ENCODE measurements at regions of chr2 and their contacts with region 1.

Region 1: DNA sequence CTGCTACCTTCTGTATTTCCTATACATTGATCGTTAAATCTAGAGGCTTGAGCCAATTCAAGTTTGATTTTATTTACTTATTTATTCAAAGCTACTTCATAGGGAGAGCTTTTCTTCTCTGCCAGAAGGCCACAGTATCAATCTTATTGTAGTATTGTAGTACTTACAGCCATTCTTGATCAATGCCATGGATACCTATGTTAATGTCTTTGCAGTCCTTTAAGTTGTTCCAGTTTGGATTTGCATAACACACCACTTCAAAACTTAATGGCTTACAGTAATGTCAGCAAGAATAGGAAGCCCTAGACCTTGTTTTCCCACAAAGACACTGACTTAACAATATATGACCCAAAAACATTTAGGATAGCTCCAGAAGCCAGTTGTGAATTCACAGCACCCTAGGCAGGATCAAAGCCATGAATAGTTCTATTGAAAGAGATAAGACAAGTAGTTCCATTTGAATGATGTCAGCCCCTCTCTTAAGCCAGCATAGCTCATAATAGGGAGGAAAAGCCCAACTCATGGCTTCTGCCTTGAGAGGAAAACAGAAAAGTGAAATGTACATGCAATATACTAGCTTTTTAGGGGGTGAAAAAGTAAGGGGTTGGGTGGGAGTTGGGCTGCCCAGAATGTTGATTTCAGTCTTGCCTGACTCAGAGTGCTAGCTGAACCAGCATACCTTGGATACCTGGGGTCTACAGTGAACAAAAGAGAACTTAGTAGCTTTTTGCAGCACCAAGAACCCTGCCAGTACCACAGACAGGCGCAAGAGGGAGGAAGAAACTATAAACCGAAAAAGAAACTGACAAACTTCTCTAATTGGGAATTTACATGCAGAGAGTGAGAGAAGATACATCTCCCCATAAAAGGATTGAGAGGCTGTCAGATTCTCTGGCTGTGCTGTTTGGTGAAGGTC is 101.4 kb downstream of the CAMKMT start:
- DNase-seq: peak in 1 of 2 experiments; percentile 17
- H3K4me3 ChIP-seq: peak overlapping the region in 1 of 4 experiments; percentile 35; a peak in 1 of 8 replicates
- H3K27ac ChIP-seq: peak overlapping the region; percentile 71; the same call in 1 of the 2 replicates
- H3K4me1 ChIP-seq: peaks cover 0 to 13% (median 6%) of the 10 kb centered on the region in 4 experiments; a peak in 4 of 7 replicates
- H3K27me3 ChIP-seq: no peaks in the 10 kb centered on the region
- CTCF ChIP-seq: peak in 2 of 3 experiments; percentile 40 to 49; a peak in 3 of 4 replicates
- EP300 ChIP-seq: no peak
- POLR2A ChIP-seq: no peak
- RAD21 ChIP-seq: peak; percentile 35 to 42

Region 2: GRCh38 chr2:44367591-44367990 is 95.6 kb before region 1 on chr2:
- CTCF ChIA-PET with region 1: no interaction called
- POLR2A ChIA-PET with region 1: no interaction called
- DNase-seq: no peak
- H3K4me3 ChIP-seq: no peak overlapping the region
- H3K27ac ChIP-seq: no peak overlapping the region
- H3K4me1 ChIP-seq: peaks cover 0 to 2% (median 0%) of the 10 kb centered on the region in 4 experiments; a peak in 1 of 7 replicates
- H3K27me3 ChIP-seq: no peaks in the 10 kb centered on the region
- CTCF ChIP-seq: no peak
- EP300 ChIP-seq: no peak
- POLR2A ChIP-seq: no peak
- RAD21 ChIP-seq: no peak

Region 3: GRCh38 chr2:44443517-44443916 is 19.7 kb before region 1 on chr2:
- CTCF ChIA-PET with region 1: interaction called, 12 read pairs
- POLR2A ChIA-PET with region 1: interaction called, 4 read pairs
- DNase-seq: no peak
- H3K4me3 ChIP-seq: no peak overlapping the region
- H3K27ac ChIP-seq: no peak overlapping the region
- H3K4me1 ChIP-seq: peaks cover 0 to 7% (median 1%) of the 10 kb centered on the region in 4 experiments; a peak in 2 of 7 replicates
- H3K27me3 ChIP-seq: no peaks in the 10 kb centered on the region
- CTCF ChIP-seq: no peak
- EP300 ChIP-seq: no peak
- POLR2A ChIP-seq: peak in 1 of 2 experiments; percentile 53; a peak in 1 of 3 replicates
- RAD21 ChIP-seq: no peak

Region 4: DNA sequence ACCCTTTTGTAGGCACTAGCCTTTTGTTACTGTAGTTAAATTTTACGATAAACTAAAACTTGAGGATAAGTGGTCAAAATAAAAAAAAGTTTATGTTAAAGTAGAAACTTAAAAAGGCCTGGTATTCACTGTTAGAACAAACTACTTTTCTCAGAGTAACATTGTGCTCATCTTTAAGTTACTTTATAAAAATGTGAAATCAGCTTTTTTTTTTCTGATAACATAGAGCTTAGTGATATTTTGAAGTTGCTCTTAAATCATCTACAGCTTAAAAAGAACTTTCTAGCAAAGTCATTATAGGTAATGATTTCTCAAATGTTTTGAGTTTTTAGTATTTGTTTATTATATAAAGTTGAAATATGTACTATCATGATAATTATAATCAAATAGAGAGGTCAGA is 23.9 kb after region 1 on chr2:
- CTCF ChIA-PET with region 1: no interaction called
- POLR2A ChIA-PET with region 1: no interaction called
- DNase-seq: no peak
- H3K4me3 ChIP-seq: no peak overlapping the region
- H3K27ac ChIP-seq: no peak overlapping the region
- H3K4me1 ChIP-seq: peaks cover 0 to 2% (median 0%) of the 10 kb centered on the region in 4 experiments; a peak in 1 of 7 replicates
- H3K27me3 ChIP-seq: peaks cover 0 to 1% (median 0%) of the 10 kb centered on the region in 4 experiments; a peak in 1 of 7 replicates
- CTCF ChIP-seq: no peak
- EP300 ChIP-seq: no peak
- POLR2A ChIP-seq: no peak
- RAD21 ChIP-seq: no peak

Region 5: DNA sequence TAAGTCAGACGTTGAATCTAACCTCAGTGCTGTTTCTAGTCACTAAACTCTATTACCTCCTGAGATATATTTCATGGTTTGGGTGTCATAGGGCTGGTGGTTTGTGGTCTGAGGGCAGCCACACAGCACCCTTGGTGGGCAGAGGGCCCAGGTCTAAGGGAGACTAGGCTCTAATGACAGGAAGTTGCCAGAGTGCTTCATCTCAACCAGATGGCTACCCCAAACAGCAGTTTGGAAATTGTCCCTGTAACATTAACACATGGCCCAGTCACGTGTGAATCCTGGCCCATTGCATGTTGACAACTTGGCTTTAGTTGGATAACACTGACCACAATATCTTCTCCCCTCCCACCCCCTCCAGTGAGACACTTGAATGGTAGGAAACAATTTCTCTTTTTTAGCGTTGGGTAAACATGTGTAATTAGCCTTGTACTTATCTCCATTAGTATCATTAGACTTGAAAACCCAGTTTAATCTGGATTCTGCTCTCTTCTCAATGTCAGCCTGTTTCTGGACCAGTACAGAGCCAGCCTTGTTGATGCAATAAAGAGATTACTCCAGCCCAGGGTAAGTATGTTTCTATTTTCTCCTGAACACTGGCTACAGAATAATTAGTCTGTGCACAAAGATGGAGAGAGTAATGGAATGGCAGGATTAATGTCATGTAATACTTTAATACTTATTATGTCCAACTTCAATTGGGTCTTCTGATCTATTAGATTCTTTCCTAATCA is 290.5 kb after region 1 on chr2:
- CTCF ChIA-PET with region 1: no interaction called
- POLR2A ChIA-PET with region 1: no interaction called
- DNase-seq: no peak
- H3K4me3 ChIP-seq: no peak overlapping the region
- H3K27ac ChIP-seq: no peak overlapping the region
- H3K4me1 ChIP-seq: peaks cover 0 to 18% (median 9%) of the 10 kb centered on the region in 4 experiments; a peak in 4 of 7 replicates
- H3K27me3 ChIP-seq: no peaks in the 10 kb centered on the region
- CTCF ChIP-seq: no peak
- EP300 ChIP-seq: no peak
- POLR2A ChIP-seq: no peak
- RAD21 ChIP-seq: no peak